Astrocyte of the cerebellum (primary cell): ENCODE measurements at regions of chr12 and their contacts with region 1.

Region 1: DNA sequence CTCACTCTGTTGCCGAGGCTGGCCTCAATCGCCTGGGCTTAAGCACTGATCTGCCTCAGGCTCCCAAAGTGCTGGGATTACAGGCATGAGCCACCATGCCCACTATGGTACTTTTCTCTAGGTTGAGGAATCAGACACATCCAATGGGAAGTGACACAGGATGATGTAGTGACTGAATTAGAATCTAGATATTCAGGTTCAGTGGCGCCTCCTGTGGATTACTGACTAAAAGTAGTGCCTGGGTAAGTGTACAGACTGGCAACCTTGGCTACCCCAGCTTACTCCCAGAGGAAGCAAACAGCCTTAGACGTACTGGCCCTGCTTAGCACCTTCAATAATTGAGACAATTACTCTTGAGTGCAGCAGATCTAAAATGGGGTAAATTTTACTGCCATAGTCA is 22.8 kb downstream of the GALNT8 start:
- DNase-seq: no peak
- H3K4me3 ChIP-seq: no peak overlapping the region
- CTCF ChIP-seq: no peak

Region 2: GRCh38 chr12:4809013-4809448 is 66.0 kb after region 1 on chr12:
- in situ Hi-C with region 1: loop called (anchors 10 kb)
- DNase-seq: peak; percentile 5
- H3K4me3 ChIP-seq: peak overlapping the region; percentile 54
- CTCF ChIP-seq: no peak

Region 3: DNA sequence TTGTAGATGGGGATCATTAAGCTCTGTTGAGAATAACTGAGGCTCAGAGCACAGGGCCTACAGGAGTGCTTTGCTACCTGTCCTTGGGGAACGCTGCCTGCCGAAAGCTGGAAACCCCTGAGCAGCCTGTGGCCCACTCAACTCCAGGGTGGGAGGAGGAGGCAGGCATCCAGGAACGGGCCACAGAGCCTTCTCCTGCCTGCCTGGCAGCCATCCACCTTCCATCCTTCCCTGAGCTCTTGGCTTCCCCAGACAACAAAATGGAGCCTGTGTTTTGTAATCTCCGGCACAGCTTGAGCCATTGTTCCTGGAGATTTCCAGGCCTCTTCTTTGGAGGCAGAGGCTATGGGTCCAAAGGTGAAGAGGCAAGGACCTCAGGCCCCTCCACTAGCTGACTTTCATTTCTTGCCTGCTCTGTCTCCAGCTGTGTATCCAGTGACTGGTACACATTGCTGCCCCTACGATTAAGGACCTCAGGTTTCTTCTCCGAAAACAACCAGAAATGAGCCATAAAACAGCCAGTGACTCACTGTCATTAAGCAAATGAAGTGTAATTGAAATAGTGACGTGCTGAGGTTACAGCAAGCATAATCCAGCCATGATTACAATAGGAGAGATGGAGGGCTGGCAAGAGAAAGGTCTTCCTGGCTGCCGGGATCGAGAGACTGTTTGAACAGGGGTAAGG is 244.2 kb after region 1 on chr12:
- in situ Hi-C with region 1: no loop called
- DNase-seq: peak; percentile 42
- H3K4me3 ChIP-seq: no peak overlapping the region
- CTCF ChIP-seq: no peak